ENCODE measurements at regions of chr14 and their contacts with region 1.

Region 1: DNA sequence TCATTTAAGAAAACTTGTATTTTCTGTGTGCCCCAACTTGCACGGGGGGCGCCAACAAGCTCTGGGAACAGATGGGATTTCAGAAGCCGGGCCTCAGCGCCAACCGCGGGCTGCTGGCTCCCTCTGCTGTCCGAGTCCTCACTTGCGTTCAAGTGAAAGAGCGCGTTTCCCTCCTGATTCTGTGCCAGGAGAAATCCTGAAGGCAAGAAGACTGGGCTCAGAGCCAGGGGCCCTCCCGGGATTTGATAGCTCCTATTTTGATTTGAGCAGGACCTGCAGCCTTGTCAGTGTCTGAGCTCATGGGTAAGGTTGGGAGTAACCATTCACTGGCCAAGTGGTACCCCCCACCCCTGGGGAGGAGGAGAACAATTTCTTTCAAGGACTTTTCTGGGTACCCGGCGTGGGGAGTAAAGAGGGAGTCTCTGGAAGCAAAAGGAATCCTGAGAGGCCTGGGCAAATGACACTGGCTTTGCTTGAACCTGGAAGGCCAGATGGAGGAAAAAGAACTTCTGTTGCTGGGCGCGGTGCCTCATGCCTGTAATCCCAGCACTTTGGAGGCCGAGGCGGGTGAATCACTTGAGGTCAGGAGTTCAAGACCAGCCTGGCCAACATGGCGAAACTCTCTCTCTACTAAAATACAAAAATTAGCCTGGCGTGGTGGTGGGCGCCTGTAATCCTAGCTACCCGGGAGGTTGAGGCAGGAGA is 179.0 kb upstream of the RGS6 start:
- DNase-seq: no peak
- H3K4me3 ChIP-seq: no peak overlapping the region
- H3K27ac ChIP-seq: no peak overlapping the region
- H3K4me1 ChIP-seq: peaks cover 9% of the 10 kb centered on the region
- H3K27me3 ChIP-seq: no peaks in the 10 kb centered on the region
- CTCF ChIP-seq: peak; percentile 87 to 97 (median 89)
- POLR2A ChIP-seq: no peak

Region 2: DNA sequence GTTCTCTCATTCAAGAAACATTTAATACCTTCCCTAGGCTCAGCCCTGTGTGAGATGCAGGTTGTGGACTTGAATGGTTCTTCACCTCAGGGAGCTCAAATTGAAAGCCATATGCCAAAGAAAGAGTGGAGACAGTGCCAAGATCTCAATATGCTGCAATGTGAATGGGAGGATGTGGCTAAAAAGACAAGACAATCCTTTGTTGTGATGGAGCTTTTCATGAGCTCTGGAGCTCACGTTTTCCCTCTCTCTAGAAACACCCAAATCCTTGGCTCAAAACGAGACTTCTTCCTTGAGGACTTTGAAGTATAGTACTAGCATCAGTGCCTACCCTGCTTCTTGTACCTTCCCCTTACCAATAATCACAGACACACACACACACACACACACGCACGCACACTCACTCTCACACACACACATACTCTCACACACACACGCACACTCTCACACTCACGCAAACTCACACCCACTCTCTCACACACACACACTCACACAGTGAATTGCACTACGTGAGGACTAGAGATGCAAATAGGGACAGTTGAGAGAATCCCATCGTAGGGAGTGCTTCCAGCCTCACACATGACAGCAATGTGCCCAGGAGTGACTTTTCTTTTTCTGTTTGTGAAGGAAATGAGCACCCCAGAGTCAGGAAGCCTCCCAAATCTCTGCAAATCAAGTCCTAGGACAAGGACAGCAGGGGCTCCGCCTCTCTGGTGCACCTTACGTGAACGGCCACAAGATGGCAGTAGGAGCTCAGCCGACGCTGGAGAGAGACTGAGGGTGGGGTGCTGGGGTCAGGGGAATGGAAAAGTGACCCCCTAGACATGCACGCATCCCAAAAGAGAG is 614.6 kb before region 1 on chr14:
- intact Hi-C with region 1: loop called (anchors 5 kb)
- DNase-seq: peak; percentile 22 to 42
- H3K4me3 ChIP-seq: no peak overlapping the region
- H3K27ac ChIP-seq: no peak overlapping the region
- H3K4me1 ChIP-seq: no peaks in the 10 kb centered on the region
- H3K27me3 ChIP-seq: no peaks in the 10 kb centered on the region
- CTCF ChIP-seq: peak; percentile 73 to 95 (median 87)
- POLR2A ChIP-seq: no peak

Region 3: DNA sequence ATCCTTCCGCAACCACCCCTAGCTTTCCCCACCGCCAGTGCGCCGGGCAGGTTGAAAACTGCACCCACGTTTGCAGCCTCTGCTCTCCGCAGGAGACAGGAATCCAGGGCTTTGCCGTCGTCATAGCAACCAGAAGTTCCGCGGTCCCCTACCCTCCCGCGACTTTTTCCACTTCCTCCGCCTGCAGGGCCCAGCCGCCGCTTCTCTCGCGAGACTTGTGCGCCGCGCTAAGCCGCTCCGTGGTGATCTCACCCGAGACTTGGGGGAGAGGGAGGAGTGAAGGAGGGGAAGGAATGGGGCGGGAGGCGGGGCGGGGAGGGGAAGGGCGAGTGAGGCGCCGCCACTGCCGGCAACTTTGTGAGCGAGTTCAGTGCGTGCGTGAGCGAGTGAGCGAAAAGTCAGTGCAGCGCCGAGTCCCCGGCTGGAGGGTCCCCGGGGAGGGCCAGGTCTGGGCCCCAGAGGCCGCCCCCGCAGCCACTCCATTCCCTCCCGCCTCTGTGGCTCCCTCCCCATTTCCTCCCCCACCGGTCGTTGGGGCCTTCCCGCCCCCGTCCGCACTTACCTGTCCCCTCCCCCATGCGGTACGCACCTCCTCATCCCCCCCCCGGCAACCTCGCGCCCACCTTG is 433.1 kb before region 1 on chr14:
- intact Hi-C with region 1: loop called (anchors 5 kb)
- DNase-seq: peak in 1 of 2 donors; percentile 99
- H3K4me3 ChIP-seq: peak within 1 kb of the TSS; percentile 85 to 91
- H3K27ac ChIP-seq: peak within 1 kb of the TSS; percentile 98
- H3K4me1 ChIP-seq: peaks cover 16% of the 10 kb centered on the region
- H3K27me3 ChIP-seq: no peaks in the 10 kb centered on the region
- CTCF ChIP-seq: no peak
- POLR2A ChIP-seq: peak in 1 of 2 donors; percentile 84

Region 4: GRCh38 chr14:71551291-71551950 is 201.9 kb before region 1 on chr14:
- intact Hi-C with region 1: no loop called
- DNase-seq: no peak
- H3K4me3 ChIP-seq: no peak overlapping the region
- H3K27ac ChIP-seq: no peak overlapping the region
- H3K4me1 ChIP-seq: no peaks in the 10 kb centered on the region
- H3K27me3 ChIP-seq: no peaks in the 10 kb centered on the region
- CTCF ChIP-seq: no peak
- POLR2A ChIP-seq: no peak